ENCODE measurements at regions of chr5 and their contacts with region 1.

Region 1: GRCh38 chr5:177113566-177114424 is 19.8 kb upstream of the NSD1 start:
- DNase-seq: peak; percentile 59
- ATAC-seq: peak; percentile 35 to 50

Region 2: GRCh38 chr5:176660860-176661641 is 452.7 kb before region 1 on chr5:
- intact Hi-C with region 1: loop called (anchors 2 kb)
- DNase-seq: peak; percentile 80
- ATAC-seq: peak; percentile 69 to 78

Region 3: DNA sequence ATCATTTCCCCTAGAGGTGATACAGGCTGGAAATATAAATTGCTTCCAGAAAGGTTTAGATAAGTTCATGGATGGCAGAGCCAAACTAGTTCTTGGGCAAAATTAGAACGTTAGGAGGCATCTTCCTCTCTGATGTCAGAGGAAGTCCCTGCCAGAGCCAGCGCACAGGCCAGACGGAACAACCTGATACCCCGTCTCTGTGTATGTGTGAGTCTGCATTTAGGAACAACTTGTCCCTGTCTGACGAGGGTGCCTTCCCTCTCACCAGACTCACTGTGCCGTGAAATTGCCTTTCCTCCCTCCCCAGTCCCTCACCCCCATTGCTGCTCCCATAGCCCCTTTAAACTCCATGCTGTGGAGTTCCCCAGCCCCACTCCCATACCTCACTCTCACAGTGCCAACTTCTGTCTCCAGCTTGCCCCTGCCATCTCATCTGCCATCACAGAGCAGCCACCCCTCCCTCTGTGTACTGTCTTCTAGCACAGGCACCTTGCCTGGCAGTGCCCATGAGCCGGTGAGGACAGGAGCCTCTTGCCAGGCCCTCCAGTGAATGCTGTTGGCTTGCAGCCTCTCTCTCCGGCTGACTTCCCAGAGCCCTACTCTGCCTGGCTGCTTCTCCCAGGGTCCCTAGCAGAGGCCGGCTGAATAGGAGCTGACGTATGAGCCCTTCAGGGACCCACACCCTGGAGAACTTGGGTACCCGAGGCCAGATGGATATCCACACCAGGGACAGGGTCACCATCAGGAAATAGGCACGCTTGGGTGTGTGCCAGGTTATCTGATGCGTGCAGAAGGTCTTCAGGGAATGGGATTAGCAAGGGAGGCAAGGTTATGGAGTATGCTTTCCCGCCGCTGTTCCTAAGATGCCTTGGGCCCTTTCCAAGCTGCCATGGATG is 276.7 kb before region 1 on chr5:
- intact Hi-C with region 1: no loop called
- DNase-seq: no peak
- ATAC-seq: no peak

Region 4: GRCh38 chr5:177071666-177072385 is 42.0 kb before region 1 on chr5:
- intact Hi-C with region 1: loop called in 1 of 2 experiments (anchors 2 kb)
- DNase-seq: peak; percentile 53
- ATAC-seq: peak; percentile 75 to 77

Region 5: DNA sequence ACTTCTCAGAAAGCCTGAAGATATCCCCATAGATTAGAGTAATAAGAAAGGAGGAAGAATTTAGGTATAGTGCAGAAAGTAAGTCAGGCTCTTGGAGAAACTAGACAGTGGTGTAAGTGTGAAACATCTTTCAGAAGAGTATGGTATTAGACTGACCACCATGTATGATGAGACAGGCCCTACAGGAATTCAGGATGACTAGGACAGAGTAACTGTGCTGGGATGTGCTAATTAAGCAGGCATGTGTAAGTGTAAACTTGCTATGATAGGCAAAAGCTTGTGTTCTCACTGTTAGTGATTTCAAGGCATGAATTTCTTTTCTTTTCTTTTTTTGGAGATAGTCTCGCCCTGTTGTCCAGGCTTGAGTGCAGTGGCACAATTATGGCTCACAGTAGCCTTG is 119.0 kb after region 1 on chr5:
- intact Hi-C with region 1: loop called in 1 of 2 experiments (anchors 10 kb)
- DNase-seq: no peak
- ATAC-seq: peak in 1 of 2 donors; percentile 56

Region 6: DNA sequence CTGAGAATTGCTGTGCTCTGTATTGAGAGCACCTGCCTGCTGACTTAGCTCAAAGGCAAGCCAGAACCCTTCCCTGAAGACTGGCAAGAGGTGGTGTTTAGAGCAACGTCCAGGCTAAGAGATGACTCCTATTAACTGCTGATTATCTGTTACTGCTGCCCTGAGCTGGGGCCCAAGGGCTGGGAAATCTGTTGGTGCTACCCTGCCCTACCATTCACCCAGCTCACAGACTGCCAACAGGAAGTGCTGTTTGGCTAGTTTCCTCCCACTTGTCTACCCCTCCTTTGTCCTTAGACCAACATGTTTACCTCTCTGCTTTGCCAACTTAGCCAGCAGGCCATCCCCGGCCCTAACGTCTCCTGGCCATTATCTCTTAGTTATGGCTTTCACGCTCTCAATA is 182.8 kb after region 1 on chr5:
- intact Hi-C with region 1: loop called (anchors 10 kb)
- DNase-seq: no peak
- ATAC-seq: peak in 1 of 2 donors; percentile 2

Region 7: DNA sequence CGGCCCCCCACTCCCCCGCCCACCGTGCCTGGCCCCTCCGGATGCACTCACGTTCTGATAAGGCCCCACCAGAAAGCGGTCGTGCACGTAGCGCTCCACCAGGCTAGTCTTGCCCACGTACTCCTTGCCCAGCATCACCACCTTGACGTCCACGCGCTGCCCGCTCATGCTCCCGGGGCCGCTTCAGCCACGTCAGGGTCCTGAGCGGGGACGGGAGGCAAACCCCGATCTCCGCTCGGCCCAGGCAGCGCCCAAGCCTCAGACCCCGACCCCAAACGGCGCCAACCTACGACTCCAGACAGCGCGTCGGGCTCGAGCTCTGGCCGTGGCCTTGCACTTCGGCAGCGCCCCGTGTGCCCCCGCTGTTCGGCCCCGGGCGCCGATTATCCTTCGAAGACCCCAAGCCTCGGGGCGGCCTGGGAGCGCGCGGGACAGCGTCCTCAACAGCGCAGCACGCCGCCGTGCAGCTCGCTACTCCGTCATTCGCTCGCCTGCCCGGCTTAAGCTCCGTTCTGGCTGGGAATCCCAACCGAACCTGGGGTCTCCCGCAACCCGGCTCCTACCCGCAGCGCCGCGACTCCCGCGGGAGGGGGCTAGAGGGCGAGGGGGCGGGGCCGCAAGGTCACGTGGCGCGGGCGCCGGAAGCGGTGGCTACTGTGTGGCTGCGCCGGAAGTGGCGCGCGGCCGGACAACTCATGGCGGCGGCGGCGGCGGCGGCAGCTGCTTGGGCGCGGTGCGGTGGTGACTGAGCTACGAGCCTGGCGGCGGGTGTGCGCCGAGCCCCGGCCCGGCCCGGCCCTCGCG is 189.5 kb after region 1 on chr5 and contains the starts of genes PRELID1 and RAB24:
- intact Hi-C with region 1: loop called (anchors 10 kb)
- DNase-seq: peak; percentile 92
- ATAC-seq: peak; percentile 82 to 93
- total RNA-seq, gene PRELID1: 52.6 to 64.0 TPM
- total RNA-seq, gene RAB24: 18.8 to 20.1 TPM

Measured in left cardiac atrium (tissue), 4 donors.